Activated CD4-positive, alpha-beta T cell treated with anti-CD3 and anti-CD28 coated beads for 36 hours (primary cell): ENCODE measurements at regions of chr7 and their contacts with region 1.

Region 1: GRCh38 chr7:99374103-99375064 is at the start of gene ARPC1B:
- DNase-seq: peak; percentile 94
- ATAC-seq: peak; percentile 61
- H3K4me3 Mint-ChIP-seq: peak within 1 kb of the TSS; percentile 72
- H3K27ac Mint-ChIP-seq: peak within 1 kb of the TSS; percentile 67
- H3K4me1 Mint-ChIP-seq: peaks cover 28% of the 10 kb centered on the region
- H3K27me3 Mint-ChIP-seq: no peaks in the 10 kb centered on the region
- total RNA-seq, gene ARPC1B: 318 to 326 TPM

Region 2: DNA sequence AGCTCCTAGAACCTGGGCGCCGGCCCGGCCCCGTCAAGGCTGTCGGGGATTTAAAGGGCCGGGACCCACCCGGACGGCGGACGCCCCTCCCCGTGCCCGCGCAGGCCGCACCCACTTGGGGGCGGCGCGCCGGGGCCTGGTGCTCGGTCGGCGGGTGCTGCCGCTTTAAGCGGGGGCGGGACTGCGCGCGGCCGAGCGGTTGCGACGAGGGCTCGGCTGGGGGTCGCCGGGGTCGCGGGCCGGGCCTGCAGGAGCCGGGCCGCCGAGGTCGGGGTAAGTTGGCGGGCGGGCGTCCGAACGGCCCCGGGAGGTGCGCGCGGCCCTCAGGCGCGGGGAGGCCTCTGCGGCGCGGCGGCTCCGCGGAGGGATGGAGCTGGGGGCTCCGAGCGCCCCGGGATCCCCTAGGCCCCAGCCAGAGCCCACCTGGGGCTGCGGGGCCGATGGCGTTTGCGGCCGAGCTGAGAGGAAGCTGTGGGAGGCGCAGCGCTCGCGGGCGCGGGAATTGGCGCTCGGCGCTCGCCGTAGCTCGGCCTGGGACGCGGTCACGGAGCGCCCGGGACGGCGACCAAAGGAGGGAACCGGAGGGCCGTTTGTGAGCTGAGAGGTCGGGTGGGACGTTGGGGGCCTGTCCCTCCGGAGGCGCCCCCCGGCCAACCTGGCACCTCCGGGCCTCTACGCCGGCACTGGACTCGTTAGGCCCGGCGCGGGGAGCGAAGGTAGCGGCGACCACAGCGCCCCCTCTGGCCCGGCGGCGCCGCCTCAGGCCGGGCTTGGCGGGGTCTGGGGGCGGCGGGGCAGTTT is 495.8 kb before region 1 on chr7 and contains the start of gene TRRAP:
- CTCF ChIA-PET with region 1: no interaction called
- POLR2A ChIA-PET with region 1: no interaction called
- intact Hi-C with region 1: loop called in 1 of 2 experiments (anchors 1 kb)
- DNase-seq: peak; percentile 88
- ATAC-seq: peak; percentile 67
- H3K4me3 Mint-ChIP-seq: peak within 1 kb of the TSS; percentile 91
- H3K27ac Mint-ChIP-seq: peak within 1 kb of the TSS; percentile 96
- H3K4me1 Mint-ChIP-seq: peaks cover 30% of the 10 kb centered on the region
- H3K27me3 Mint-ChIP-seq: no peaks in the 10 kb centered on the region
- total RNA-seq, gene TRRAP: 51.7 to 54.0 TPM

Region 3: GRCh38 chr7:99128076-99128950 is 246.1 kb before region 1 on chr7:
- CTCF ChIA-PET with region 1: no interaction called
- POLR2A ChIA-PET with region 1: no interaction called
- intact Hi-C with region 1: no loop called
- DNase-seq: no peak
- ATAC-seq: no peak
- H3K4me3 Mint-ChIP-seq: no peak overlapping the region
- H3K27ac Mint-ChIP-seq: no peak overlapping the region
- H3K4me1 Mint-ChIP-seq: peaks cover 43% of the 10 kb centered on the region
- H3K27me3 Mint-ChIP-seq: no peaks in the 10 kb centered on the region

Region 4: DNA sequence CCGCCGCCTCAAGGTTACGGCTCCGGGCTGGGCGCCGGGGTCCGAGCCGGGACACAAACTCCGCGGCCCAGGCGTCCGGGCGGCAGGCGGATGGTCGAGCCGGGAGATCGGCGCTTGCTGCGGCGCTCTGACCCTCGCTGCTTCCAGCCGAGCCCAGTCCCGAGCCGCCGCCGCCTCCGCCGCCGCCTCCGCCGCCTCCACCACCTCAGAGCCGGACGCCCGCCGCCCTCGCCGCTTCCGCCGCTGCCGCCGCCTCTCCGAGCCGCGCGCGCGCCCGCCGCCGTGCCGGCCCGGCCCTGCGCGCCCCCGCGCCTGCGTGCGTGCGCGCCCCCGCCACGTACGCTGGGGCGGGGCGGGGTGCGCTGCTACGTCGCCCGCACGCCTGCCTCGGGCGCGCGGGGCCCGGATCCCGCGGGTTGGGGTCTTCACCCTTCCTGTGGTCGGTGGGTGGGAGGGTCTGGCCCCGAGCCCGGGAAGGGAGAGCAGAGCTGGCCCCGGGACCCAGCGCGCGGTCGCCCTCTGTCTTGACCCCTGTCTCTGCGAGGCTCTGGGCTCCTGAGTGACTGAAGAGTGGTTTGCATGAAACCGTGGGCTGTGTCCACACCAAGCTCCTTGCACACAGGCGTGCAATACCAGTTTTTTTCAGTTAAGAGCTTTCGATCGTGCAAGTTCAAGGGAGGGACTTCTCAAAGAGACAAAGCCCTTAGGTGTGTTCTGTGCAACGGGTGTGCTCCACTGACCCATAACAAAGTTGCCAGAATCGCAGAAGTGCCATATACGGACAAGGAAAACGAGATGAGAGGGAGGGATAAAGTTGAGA is 230.3 kb before region 1 on chr7 and contains the start of gene SMURF1:
- CTCF ChIA-PET with region 1: no interaction called
- POLR2A ChIA-PET with region 1: no interaction called
- intact Hi-C with region 1: loop called in 1 of 2 experiments (anchors 1 kb)
- DNase-seq: peak; percentile 83
- ATAC-seq: peak; percentile 37
- H3K4me3 Mint-ChIP-seq: peak within 1 kb of the TSS; percentile 91
- H3K27ac Mint-ChIP-seq: peak within 1 kb of the TSS; percentile 93
- H3K4me1 Mint-ChIP-seq: peaks cover 35% of the 10 kb centered on the region
- H3K27me3 Mint-ChIP-seq: peaks cover 5% of the 10 kb centered on the region
- total RNA-seq, gene SMURF1: 12.4 to 13.4 TPM

Region 5: DNA sequence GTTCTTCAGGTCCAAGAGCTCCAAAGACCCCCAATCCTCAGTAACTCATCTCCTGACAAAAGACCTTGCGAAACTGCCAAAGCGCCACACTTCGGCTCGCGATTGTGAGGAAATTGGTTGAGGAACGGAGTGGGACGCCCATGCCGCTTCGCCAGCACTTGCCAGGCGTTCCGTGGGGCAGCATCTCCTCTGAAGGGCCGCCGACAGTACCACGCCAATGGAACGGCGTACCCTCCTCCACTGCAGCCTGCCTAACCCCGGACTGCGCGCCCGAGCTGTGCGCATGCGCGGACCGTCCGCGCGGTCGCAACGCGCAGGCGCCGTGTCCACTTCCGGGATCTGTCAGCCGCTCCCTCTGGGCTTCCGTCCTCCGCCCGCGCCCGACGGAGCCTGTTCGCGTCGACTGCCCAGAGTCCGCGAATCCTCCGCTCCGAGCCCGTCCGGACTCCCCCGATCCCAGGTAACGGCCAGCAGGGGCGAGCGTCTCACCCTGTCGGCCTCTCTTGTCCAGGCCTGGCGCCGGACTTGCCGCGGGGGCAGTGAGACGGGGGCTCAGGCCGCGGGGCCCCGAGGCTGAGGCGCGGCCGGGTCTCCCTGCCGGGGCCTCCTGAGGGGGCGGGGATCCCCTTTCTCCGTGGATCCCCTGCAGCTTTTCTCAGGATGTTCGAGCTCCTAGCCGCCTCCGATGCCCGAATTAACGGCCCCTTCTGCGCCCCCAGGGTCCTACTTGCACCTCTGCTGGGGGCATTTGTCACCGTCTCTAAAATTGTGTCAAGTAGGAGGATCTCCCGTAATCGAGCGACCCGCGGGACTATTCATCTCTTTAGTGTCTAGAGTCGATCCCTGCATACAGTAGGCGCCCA is 48.6 kb before region 1 on chr7 and contains the start of gene ARPC1A:
- CTCF ChIA-PET with region 1: interaction called, 3 read pairs
- POLR2A ChIA-PET with region 1: interaction called, 6 read pairs
- intact Hi-C with region 1: loop called in 1 of 2 experiments (anchors 1 kb)
- DNase-seq: peak; percentile 95
- ATAC-seq: peak; percentile 86
- H3K4me3 Mint-ChIP-seq: peak within 1 kb of the TSS; percentile 85
- H3K27ac Mint-ChIP-seq: peak within 1 kb of the TSS; percentile 75
- H3K4me1 Mint-ChIP-seq: peaks cover 40% of the 10 kb centered on the region
- H3K27me3 Mint-ChIP-seq: no peaks in the 10 kb centered on the region
- total RNA-seq, gene ARPC1A: 52.3 to 65.6 TPM

Region 6: DNA sequence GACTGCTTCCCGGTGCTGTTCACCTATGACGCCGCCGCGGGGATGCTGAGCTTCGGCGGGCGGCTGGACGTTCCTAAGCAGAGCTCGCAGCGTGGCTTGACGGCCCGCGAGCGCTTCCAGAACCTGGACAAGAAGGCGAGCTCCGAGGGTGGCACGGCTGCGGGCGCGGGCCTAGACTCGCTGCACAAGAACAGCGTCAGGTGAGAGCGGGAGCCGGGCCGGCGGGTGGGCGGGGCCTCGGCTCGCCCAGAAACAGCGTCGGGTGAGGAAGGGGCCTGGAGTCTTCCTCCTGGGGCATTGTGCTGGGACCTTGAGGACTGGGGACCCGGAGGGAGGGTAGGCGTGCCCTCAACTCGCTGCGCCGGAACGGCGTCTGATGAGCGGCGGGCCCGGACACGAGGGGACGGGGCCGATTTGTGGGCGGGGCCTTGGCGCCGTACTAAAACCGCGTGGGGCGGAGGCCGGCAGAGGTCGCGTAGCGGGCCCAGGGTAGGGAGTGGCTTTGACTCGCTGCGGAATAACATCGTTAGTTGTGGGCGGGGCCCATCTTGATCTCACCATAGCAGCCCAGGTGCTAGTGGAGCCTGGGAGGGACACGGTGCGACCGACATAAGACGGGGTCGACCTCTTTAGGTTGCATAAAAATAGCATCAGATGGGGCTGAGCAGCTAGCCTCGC is 18.4 kb after region 1 on chr7:
- CTCF ChIA-PET with region 1: interaction called, 3 read pairs
- POLR2A ChIA-PET with region 1: interaction called, 8 read pairs
- intact Hi-C with region 1: loop called (anchors 1 kb)
- DNase-seq: peak; percentile 89
- ATAC-seq: peak; percentile 90
- H3K4me3 Mint-ChIP-seq: peak overlapping the region; percentile 50
- H3K27ac Mint-ChIP-seq: peak overlapping the region; percentile 80
- H3K4me1 Mint-ChIP-seq: peaks cover 20% of the 10 kb centered on the region
- H3K27me3 Mint-ChIP-seq: no peaks in the 10 kb centered on the region

Region 7: GRCh38 chr7:99465421-99465768 is 91.0 kb after region 1 on chr7:
- CTCF ChIA-PET with region 1: no interaction called
- POLR2A ChIA-PET with region 1: no interaction called
- intact Hi-C with region 1: loop called in 1 of 2 experiments (anchors 1 kb)
- DNase-seq: peak; percentile 31
- ATAC-seq: peak; percentile 4
- H3K4me3 Mint-ChIP-seq: peak overlapping the region; percentile 85
- H3K27ac Mint-ChIP-seq: peak overlapping the region; percentile 84
- H3K4me1 Mint-ChIP-seq: peaks cover 34% of the 10 kb centered on the region
- H3K27me3 Mint-ChIP-seq: no peaks in the 10 kb centered on the region

Region 8: DNA sequence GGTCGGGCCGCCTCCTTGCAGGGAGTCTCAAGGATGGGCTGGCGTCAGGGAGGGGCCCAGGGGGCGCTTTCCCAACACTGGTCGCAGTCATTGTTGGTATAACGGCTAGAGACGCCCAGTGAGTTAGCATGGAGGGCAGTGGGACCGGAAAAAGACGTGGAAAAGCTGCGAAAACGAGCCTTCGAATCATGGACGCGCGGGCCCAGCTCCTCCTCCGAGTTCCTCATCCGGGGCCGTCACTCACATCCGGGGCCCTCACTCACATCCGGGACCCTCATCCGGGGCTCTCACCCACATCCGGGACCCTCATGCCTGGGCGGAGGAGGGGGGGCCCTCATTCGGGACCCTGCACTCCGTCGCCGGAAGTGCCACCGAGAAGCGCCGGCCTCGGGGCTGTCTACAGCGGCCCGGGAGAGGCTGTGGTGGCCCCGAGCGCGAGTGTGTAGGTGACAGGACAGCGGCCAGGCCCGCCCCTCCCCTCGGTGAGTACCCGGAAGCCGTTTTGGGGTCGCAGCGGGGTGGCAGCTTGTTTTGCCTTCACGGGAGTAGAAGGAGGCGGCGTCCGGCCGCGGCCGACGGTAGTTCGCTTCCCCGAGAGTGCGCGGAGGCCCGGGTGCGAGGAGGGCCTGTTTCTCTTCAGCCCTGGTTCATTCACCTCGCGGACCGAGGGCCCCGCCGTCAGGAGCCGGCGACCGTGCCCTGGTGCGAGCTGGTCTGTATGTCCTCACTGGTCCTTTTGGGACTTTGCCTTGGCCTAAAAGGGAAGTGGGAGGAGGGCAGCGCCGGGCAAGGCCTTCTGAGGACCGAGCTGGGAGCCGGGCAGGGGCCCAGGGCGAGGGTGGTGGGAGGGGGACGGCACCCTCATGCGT is 184.2 kb after region 1 on chr7 and contains the start of gene ZNF655:
- CTCF ChIA-PET with region 1: no interaction called
- POLR2A ChIA-PET with region 1: no interaction called
- intact Hi-C with region 1: loop called in 1 of 2 experiments (anchors 2 kb)
- DNase-seq: peak; percentile 90
- ATAC-seq: peak; percentile 75
- H3K4me3 Mint-ChIP-seq: peak within 1 kb of the TSS; percentile 94
- H3K27ac Mint-ChIP-seq: peak within 1 kb of the TSS; percentile 96
- H3K4me1 Mint-ChIP-seq: peaks cover 49% of the 10 kb centered on the region
- H3K27me3 Mint-ChIP-seq: no peaks in the 10 kb centered on the region
- total RNA-seq, gene ZNF655: 51.1 to 52.0 TPM